ENCODE measurements at regions of chr6 and their contacts with region 1.

Region 1: DNA sequence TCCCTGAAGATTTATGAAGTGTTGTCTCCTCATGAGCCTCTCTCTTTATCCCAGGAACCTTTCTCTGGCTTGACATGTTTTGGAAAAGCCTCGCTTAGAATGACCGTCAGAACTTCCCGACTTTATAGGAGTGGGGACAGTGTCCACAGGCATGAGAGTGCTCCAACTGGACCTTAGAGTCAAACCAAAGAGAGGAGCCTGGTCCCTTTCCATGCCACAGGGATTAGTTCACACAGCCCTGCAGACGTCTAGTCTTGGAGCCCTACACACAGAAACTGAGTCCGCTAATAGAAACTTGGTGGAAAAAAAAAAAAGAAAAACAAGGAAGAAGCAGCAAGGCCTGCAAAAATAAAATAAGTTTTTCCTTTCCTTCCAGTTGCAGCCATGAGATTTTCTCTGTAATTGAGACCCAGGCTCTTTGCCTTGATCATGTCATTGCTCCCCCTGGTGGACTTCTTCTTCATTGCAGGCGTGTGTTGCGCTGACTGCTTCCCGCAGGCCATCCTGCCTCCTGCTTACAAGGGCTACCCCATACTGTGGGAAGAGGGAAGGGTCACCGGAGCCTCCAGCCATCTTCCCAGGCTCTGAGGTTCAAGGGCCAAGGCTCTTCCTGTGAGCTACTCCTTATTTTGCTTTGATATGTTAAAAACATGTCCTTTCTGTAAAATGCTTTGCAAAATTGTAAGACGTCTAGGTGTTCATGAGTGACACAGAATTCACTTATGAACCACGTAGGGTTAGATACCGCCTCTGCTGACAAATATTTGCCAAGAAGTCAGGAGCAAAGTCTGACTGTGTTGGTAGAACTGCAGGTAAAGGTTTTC is 201.0 kb downstream of the UST start:
- DNase-seq: peak; percentile 88
- ATAC-seq: peak; percentile 88
- H3K4me3 ChIP-seq: no peak overlapping the region
- H3K4me3 Mint-ChIP-seq: no peak overlapping the region
- H3K27ac ChIP-seq: no peak overlapping the region
- H3K27ac Mint-ChIP-seq: no peak overlapping the region
- H3K4me1 ChIP-seq: peaks cover 0 to 4% of the 10 kb centered on the region in 2 donors
- H3K4me1 Mint-ChIP-seq: peaks cover 13% of the 10 kb centered on the region
- H3K27me3 ChIP-seq: no peaks in the 10 kb centered on the region
- H3K27me3 Mint-ChIP-seq: no peaks in the 10 kb centered on the region
- CTCF ChIP-seq: peak; percentile 92

Region 2: GRCh38 chr6:148450866-148451265 is 497.0 kb before region 1 on chr6:
- CTCF ChIA-PET with region 1: no interaction called
- POLR2A ChIA-PET with region 1: interaction called, 10 read pairs
- intact Hi-C with region 1: no loop called
- DNase-seq: no peak
- ATAC-seq: no peak
- H3K4me3 ChIP-seq: no peak overlapping the region
- H3K4me3 Mint-ChIP-seq: no peak overlapping the region
- H3K27ac ChIP-seq: no peak overlapping the region
- H3K27ac Mint-ChIP-seq: no peak overlapping the region
- H3K4me1 ChIP-seq: no peaks in the 10 kb centered on the region
- H3K4me1 Mint-ChIP-seq: peaks cover 8% of the 10 kb centered on the region
- H3K27me3 ChIP-seq: peaks cover 0 to 7% (median 1%) of the 10 kb centered on the region in 4 experiments
- H3K27me3 Mint-ChIP-seq: peaks cover 19% of the 10 kb centered on the region
- CTCF ChIP-seq: no peak

Region 3: DNA sequence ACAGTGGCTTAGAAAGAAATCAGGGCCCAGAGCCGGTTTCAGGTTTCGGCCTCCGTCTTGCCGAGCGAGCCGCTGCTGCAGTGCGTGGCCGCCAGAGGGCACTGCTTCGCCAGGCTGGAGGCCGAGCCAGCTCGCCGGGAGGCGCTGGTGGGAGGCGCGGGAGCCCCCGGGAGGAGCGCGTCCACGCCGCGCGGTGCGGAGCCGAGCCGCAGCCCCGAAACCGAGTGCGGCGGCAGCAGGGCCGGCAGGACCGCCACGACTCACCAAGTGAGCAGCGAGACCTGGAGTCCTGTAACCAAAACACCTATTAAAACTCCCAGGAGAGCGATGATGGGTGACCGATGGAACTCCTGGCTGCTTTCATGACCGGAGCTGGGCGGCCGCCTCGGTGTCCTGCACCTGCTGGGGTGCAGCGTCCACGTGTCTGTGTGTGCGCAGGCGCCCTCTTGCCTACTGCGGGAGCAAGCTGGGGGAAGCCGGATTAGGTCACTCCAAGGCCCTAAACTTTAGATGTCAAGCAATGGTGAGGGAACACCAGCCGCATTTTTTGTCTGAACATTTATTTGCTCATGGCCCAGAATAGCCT is 387.9 kb before region 1 on chr6:
- CTCF ChIA-PET with region 1: interaction called, 5 read pairs
- POLR2A ChIA-PET with region 1: no interaction called
- intact Hi-C with region 1: loop called (anchors 1 kb)
- DNase-seq: peak; percentile 82
- ATAC-seq: peak; percentile 88
- H3K4me3 ChIP-seq: peak overlapping the region in 4 of 5 experiments; percentile 26 to 64 (median 52)
- H3K4me3 Mint-ChIP-seq: peak overlapping the region; percentile 60
- H3K27ac ChIP-seq: no peak overlapping the region
- H3K27ac Mint-ChIP-seq: no peak overlapping the region
- H3K4me1 ChIP-seq: peaks cover 14 to 32% of the 10 kb centered on the region in 2 donors
- H3K4me1 Mint-ChIP-seq: peaks cover 23% of the 10 kb centered on the region
- H3K27me3 ChIP-seq: peaks cover 0 to 2% (median 0%) of the 10 kb centered on the region in 4 experiments
- H3K27me3 Mint-ChIP-seq: no peaks in the 10 kb centered on the region
- CTCF ChIP-seq: peak; percentile 98

Region 4: DNA sequence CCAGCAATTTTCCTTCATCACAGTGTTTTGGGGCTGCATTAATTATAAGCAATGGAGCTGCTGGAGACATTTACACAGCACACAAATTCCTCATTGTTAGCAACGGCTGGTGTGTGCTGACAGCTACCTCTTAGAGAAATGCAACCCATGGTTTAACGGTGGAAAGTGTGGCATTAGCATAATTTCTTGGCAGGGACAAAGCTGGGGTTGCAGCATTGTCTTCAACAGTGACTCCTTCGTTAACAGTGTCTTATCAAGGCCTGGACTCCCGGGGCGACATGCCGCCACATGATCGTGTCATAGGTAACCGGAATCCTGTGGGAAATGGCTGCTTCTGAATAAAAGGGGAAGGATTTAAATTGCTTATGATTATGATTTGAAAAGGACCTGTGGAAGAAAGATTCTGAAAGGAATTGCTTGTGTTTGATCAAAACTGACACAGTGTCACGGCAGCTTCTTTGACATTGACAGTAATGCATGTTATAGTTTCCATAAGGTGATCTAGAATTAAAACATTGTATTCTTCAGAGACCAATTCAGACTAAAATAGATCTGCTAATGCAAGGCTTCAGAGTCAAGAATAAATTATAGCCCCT is 73.0 kb before region 1 on chr6:
- CTCF ChIA-PET with region 1: no interaction called
- POLR2A ChIA-PET with region 1: no interaction called
- intact Hi-C with region 1: loop called (anchors 10 kb)
- DNase-seq: no peak
- ATAC-seq: no peak
- H3K4me3 ChIP-seq: no peak overlapping the region
- H3K4me3 Mint-ChIP-seq: no peak overlapping the region
- H3K27ac ChIP-seq: no peak overlapping the region
- H3K27ac Mint-ChIP-seq: no peak overlapping the region
- H3K4me1 ChIP-seq: peaks cover 23 to 33% of the 10 kb centered on the region in 2 donors
- H3K4me1 Mint-ChIP-seq: peaks cover 44% of the 10 kb centered on the region
- H3K27me3 ChIP-seq: no peaks in the 10 kb centered on the region
- H3K27me3 Mint-ChIP-seq: no peaks in the 10 kb centered on the region
- CTCF ChIP-seq: no peak

Region 5: DNA sequence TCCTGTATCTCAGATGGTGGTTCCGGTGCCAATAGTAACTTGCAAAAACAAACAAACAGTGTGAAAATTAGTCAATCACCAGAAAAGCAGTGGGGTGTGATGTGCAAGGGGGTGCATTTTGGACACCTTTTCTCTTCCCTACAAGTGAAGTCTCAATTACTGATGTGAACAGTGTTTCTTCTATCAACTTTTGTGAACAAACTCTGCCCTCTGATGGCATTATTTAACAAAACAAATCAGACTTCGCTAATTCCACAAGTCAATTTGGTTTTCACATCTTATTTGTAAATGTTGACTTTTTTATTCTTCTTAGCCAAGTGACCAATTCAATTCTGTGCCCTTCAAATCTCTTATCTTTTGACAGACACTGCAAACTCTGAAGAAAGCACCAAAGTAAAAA is 11.2 kb after region 1 on chr6:
- CTCF ChIA-PET with region 1: interaction called, 10 read pairs
- POLR2A ChIA-PET with region 1: no interaction called
- intact Hi-C with region 1: no loop called
- DNase-seq: no peak
- ATAC-seq: no peak
- H3K4me3 ChIP-seq: no peak overlapping the region
- H3K4me3 Mint-ChIP-seq: no peak overlapping the region
- H3K27ac ChIP-seq: no peak overlapping the region
- H3K27ac Mint-ChIP-seq: no peak overlapping the region
- H3K4me1 ChIP-seq: no peaks in the 10 kb centered on the region
- H3K4me1 Mint-ChIP-seq: peaks cover 10% of the 10 kb centered on the region
- H3K27me3 ChIP-seq: no peaks in the 10 kb centered on the region
- H3K27me3 Mint-ChIP-seq: no peaks in the 10 kb centered on the region
- CTCF ChIP-seq: no peak

Measured in B cell (primary cell).